B cell (primary cell): ENCODE measurements at regions of chr1 and their contacts with region 1.

Region 1: GRCh38 chr1:178749581-178750166 is 24.6 kb downstream of the RALGPS2 start:
- DNase-seq: no peak
- ATAC-seq: no peak
- H3K4me3 ChIP-seq: no peak overlapping the region
- H3K4me3 Mint-ChIP-seq: peak overlapping the region; percentile 19
- H3K27ac ChIP-seq: peak overlapping the region in 1 of 2 donors; percentile 78
- H3K27ac Mint-ChIP-seq: peak overlapping the region; percentile 56
- H3K4me1 ChIP-seq: peaks cover 31 to 36% of the 10 kb centered on the region in 2 donors
- H3K4me1 Mint-ChIP-seq: peaks cover 65% of the 10 kb centered on the region
- H3K27me3 ChIP-seq: no peaks in the 10 kb centered on the region
- H3K27me3 Mint-ChIP-seq: no peaks in the 10 kb centered on the region
- CTCF ChIP-seq: no peak

Region 2: DNA sequence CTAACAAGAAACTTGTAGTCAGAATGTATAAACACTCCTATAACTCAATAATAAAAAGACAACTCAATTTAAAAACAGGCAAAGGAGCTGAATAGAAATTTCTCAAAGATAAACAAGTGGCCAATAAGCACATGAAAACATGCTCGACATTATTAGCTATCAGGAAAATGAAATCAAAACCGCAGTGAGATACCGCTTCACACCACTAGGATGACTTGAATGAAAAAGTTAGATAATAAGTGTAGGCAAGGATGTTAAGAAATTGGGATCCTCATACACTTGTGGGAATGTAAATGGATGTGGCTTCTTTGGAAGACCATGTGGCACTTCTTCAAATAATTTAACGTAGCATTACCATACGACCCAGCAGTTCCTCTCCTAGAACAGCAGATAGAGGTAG is 15.7 kb before region 1 on chr1:
- CTCF ChIA-PET with region 1: interaction called, 5 read pairs
- POLR2A ChIA-PET with region 1: interaction called, 4 read pairs
- intact Hi-C with region 1: loop called (anchors 2 kb)
- DNase-seq: no peak
- ATAC-seq: no peak
- H3K4me3 ChIP-seq: no peak overlapping the region
- H3K4me3 Mint-ChIP-seq: peak overlapping the region; percentile 38
- H3K27ac ChIP-seq: peak overlapping the region in 1 of 2 donors; percentile 78
- H3K27ac Mint-ChIP-seq: peak overlapping the region; percentile 32
- H3K4me1 ChIP-seq: peaks cover 45 to 60% of the 10 kb centered on the region in 2 donors
- H3K4me1 Mint-ChIP-seq: peaks cover 65% of the 10 kb centered on the region
- H3K27me3 ChIP-seq: no peaks in the 10 kb centered on the region
- H3K27me3 Mint-ChIP-seq: no peaks in the 10 kb centered on the region
- CTCF ChIP-seq: peak; percentile 50

Region 3: DNA sequence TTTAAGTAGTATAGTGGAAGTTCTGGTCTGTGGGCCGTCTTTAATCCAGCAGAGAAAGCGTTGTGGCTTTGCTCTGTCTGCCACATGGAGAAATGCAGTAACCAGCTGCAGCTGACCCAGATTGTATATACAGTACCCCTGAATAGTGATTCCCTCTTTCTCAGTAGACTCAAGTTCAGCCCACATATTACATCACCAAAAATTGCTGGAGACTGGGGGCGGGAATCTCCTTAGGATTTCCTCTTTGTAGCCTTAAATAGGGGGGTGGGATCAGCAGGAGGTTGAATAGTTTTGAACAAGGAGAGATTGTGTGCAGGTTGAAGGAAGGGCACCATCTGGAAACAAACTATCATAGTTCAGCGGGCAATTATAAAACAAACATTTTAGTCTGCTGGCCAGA is 121.3 kb after region 1 on chr1 and contains the start of gene ANGPTL1:
- CTCF ChIA-PET with region 1: no interaction called
- POLR2A ChIA-PET with region 1: no interaction called
- intact Hi-C with region 1: no loop called
- DNase-seq: no peak
- ATAC-seq: no peak
- H3K4me3 ChIP-seq: no peak within 1 kb of the TSS
- H3K4me3 Mint-ChIP-seq: no peak within 1 kb of the TSS
- H3K27ac ChIP-seq: peak within 1 kb of the TSS in 1 of 2 donors; percentile 73
- H3K27ac Mint-ChIP-seq: peak within 1 kb of the TSS; percentile 85
- H3K4me1 ChIP-seq: peaks cover 0 to 13% of the 10 kb centered on the region in 2 donors
- H3K4me1 Mint-ChIP-seq: peaks cover 43% of the 10 kb centered on the region
- H3K27me3 ChIP-seq: no peaks in the 10 kb centered on the region
- H3K27me3 Mint-ChIP-seq: no peaks in the 10 kb centered on the region
- CTCF ChIP-seq: no peak
- total RNA-seq, gene ANGPTL1: not detected in 2 replicates

Region 4: DNA sequence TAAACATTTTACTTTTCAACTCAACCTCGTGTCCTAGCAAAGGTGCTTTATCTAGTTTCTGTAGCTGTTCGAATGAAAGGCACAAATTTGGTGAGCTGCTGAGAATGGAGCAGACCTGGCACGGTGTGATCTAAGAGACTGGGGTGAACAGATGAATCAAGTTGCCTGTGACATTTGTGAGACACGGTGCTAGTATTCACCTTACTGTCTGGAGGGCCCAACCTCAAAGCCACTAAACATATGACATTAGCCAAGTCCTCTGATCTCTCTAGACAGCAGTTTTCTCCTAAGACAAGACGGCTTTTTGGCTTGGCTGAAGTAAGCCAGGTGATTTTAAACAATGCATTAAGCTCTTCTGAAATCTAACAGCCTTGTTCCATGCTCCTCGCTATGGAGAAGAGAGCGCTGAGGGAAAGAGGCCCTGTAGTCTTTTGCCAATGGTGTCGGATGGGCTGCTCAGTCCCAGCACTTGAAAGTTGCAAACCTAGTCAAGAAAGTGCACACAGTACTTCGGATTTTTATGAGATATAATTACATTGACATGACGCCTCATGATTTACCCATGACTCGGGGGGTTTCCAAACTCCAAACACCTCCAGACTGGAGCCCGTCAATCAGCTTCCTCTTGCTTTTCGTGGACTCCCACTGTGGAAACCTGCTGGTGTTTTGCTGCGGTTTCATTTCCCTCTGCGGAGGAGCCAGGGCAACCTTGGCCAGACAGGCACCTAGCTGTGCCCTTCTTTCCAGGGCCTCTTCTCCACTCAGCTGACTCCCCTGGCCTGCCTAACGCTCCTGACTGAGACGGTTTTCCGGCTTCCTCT is 331.4 kb after region 1 on chr1:
- CTCF ChIA-PET with region 1: no interaction called
- POLR2A ChIA-PET with region 1: no interaction called
- intact Hi-C with region 1: no loop called
- DNase-seq: peak; percentile 93
- ATAC-seq: peak; percentile 28
- H3K4me3 ChIP-seq: peak overlapping the region; percentile 72 to 95 (median 87)
- H3K4me3 Mint-ChIP-seq: peak overlapping the region; percentile 98
- H3K27ac ChIP-seq: peak overlapping the region; percentile 94 to 95
- H3K27ac Mint-ChIP-seq: peak overlapping the region; percentile 97
- H3K4me1 ChIP-seq: peaks cover 24 to 36% of the 10 kb centered on the region in 2 donors
- H3K4me1 Mint-ChIP-seq: peaks cover 45% of the 10 kb centered on the region
- H3K27me3 ChIP-seq: no peaks in the 10 kb centered on the region
- H3K27me3 Mint-ChIP-seq: no peaks in the 10 kb centered on the region
- CTCF ChIP-seq: no peak